CD8-positive, alpha-beta memory T cell (primary cell): ENCODE measurements at regions of chr1 and their contacts with region 1.

Region 1: GRCh38 chr1:204544321-204544720 is 28.1 kb downstream of the MDM4 start:
- DNase-seq: peak in 2 of 5 donors; percentile 55 to 63
- H3K4me3 ChIP-seq: no peak overlapping the region
- H3K4me3 Mint-ChIP-seq: peak overlapping the region; percentile 4 to 66 (median 44)
- H3K27ac ChIP-seq: no peak overlapping the region
- H3K27ac Mint-ChIP-seq: peak overlapping the region; percentile 44 to 81 (median 74)
- H3K4me1 ChIP-seq: peaks cover 39% of the 10 kb centered on the region
- H3K4me1 Mint-ChIP-seq: peaks cover 54 to 67% (median 65%) of the 10 kb centered on the region in 3 donors
- H3K27me3 ChIP-seq: no peaks in the 10 kb centered on the region
- H3K27me3 Mint-ChIP-seq: no peaks in the 10 kb centered on the region

Region 2: DNA sequence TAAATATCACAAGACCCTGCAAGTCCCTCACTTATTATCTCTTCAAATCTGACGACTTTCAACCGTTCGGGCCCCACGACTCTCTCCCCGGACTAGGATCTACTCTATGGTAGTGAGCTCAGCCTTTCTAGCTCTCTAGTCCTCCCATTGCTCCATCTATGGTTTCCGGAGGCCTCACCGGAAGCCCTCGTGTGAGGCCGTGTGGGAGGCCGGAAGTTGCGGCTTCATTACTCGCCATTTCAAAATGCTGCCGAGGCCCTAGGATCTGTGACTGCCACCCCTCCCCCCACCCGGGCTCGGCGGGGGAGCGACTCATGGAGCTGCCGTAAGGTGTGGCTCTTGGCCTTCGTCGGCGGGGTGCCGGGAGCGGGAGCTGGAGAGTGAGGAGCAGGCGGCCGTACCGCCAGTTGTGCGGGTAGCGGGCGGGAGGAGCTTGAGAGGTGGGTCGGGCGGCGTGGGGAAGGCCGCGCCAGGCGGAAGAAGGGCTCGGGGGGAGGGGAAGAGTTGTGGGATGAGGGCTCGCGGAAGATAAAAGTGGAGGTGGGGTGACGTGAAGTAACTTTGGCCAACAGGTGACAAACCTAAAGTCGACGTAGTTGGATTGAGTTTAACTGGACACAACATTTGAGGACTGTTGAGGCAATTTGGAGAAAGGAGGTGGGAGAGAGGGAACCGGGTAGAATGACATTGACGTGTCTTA is 28.0 kb before region 1 on chr1 and contains the start of gene MDM4:
- CTCF ChIA-PET with region 1: interaction called, 14 read pairs
- POLR2A ChIA-PET with region 1: interaction called, 11 read pairs
- DNase-seq: peak; percentile 85 to 96 (median 93)
- H3K4me3 ChIP-seq: peak within 1 kb of the TSS; percentile 81
- H3K4me3 Mint-ChIP-seq: peak within 1 kb of the TSS in 1 of 7 donors; percentile 29
- H3K27ac ChIP-seq: peak within 1 kb of the TSS; percentile 97
- H3K27ac Mint-ChIP-seq: peak within 1 kb of the TSS in 2 of 8 donors; percentile 77 to 99
- H3K4me1 ChIP-seq: peaks cover 83% of the 10 kb centered on the region
- H3K4me1 Mint-ChIP-seq: peaks cover 30 to 72% (median 60%) of the 10 kb centered on the region in 3 donors
- H3K27me3 ChIP-seq: no peaks in the 10 kb centered on the region
- H3K27me3 Mint-ChIP-seq: no peaks in the 10 kb centered on the region
- total RNA-seq, gene MDM4: 80.7 TPM

Region 3: GRCh38 chr1:204523605-204524215 is 20.6 kb before region 1 on chr1:
- CTCF ChIA-PET with region 1: interaction called, 8 read pairs
- POLR2A ChIA-PET with region 1: interaction called, 10 read pairs
- DNase-seq: no peak
- H3K4me3 ChIP-seq: no peak overlapping the region
- H3K4me3 Mint-ChIP-seq: peak overlapping the region in 5 of 7 donors; percentile 31 to 58 (median 54)
- H3K27ac ChIP-seq: no peak overlapping the region
- H3K27ac Mint-ChIP-seq: peak overlapping the region; percentile 13 to 96 (median 62)
- H3K4me1 ChIP-seq: peaks cover 64% of the 10 kb centered on the region
- H3K4me1 Mint-ChIP-seq: peaks cover 19 to 65% (median 45%) of the 10 kb centered on the region in 3 donors
- H3K27me3 ChIP-seq: no peaks in the 10 kb centered on the region
- H3K27me3 Mint-ChIP-seq: no peaks in the 10 kb centered on the region